B cell (primary cell): ENCODE measurements at regions of chr13 and their contacts with region 1.

Region 1: GRCh38 chr13:30865123-30866049 is 40.7 kb upstream of the MEDAG start:
- DNase-seq: peak; percentile 66
- ATAC-seq: peak; percentile 97
- H3K4me3 ChIP-seq: no peak overlapping the region
- H3K4me3 Mint-ChIP-seq: no peak overlapping the region
- H3K27ac ChIP-seq: no peak overlapping the region
- H3K27ac Mint-ChIP-seq: no peak overlapping the region
- H3K4me1 ChIP-seq: peaks cover 0 to 2% of the 10 kb centered on the region in 2 donors
- H3K4me1 Mint-ChIP-seq: peaks cover 2% of the 10 kb centered on the region
- H3K27me3 ChIP-seq: peaks cover 0 to 10% (median 2%) of the 10 kb centered on the region in 4 experiments
- H3K27me3 Mint-ChIP-seq: peaks cover 15% of the 10 kb centered on the region
- CTCF ChIP-seq: peak; percentile 94

Region 2: GRCh38 chr13:30679483-30680330 is 185.7 kb before region 1 on chr13:
- CTCF ChIA-PET with region 1: no interaction called
- POLR2A ChIA-PET with region 1: no interaction called
- intact Hi-C with region 1: loop called (anchors 1 kb)
- DNase-seq: peak; percentile 66
- ATAC-seq: peak; percentile 91
- H3K4me3 ChIP-seq: no peak overlapping the region
- H3K4me3 Mint-ChIP-seq: no peak overlapping the region
- H3K27ac ChIP-seq: no peak overlapping the region
- H3K27ac Mint-ChIP-seq: peak overlapping the region; percentile 54
- H3K4me1 ChIP-seq: peaks cover 3 to 13% of the 10 kb centered on the region in 2 donors
- H3K4me1 Mint-ChIP-seq: peaks cover 12% of the 10 kb centered on the region
- H3K27me3 ChIP-seq: no peaks in the 10 kb centered on the region
- H3K27me3 Mint-ChIP-seq: no peaks in the 10 kb centered on the region
- CTCF ChIP-seq: peak; percentile 72

Region 3: GRCh38 chr13:30880151-30880855 is 14.9 kb after region 1 on chr13:
- CTCF ChIA-PET with region 1: interaction called, 14 read pairs
- POLR2A ChIA-PET with region 1: no interaction called
- intact Hi-C with region 1: no loop called
- DNase-seq: no peak
- ATAC-seq: no peak
- H3K4me3 ChIP-seq: no peak overlapping the region
- H3K4me3 Mint-ChIP-seq: no peak overlapping the region
- H3K27ac ChIP-seq: no peak overlapping the region
- H3K27ac Mint-ChIP-seq: no peak overlapping the region
- H3K4me1 ChIP-seq: no peaks in the 10 kb centered on the region
- H3K4me1 Mint-ChIP-seq: no peaks in the 10 kb centered on the region
- H3K27me3 ChIP-seq: peaks cover 0 to 9% (median 2%) of the 10 kb centered on the region in 4 experiments
- H3K27me3 Mint-ChIP-seq: peaks cover 20% of the 10 kb centered on the region
- CTCF ChIP-seq: no peak